ENCODE measurements at regions of chr12 and their contacts with region 1.

Region 1: DNA sequence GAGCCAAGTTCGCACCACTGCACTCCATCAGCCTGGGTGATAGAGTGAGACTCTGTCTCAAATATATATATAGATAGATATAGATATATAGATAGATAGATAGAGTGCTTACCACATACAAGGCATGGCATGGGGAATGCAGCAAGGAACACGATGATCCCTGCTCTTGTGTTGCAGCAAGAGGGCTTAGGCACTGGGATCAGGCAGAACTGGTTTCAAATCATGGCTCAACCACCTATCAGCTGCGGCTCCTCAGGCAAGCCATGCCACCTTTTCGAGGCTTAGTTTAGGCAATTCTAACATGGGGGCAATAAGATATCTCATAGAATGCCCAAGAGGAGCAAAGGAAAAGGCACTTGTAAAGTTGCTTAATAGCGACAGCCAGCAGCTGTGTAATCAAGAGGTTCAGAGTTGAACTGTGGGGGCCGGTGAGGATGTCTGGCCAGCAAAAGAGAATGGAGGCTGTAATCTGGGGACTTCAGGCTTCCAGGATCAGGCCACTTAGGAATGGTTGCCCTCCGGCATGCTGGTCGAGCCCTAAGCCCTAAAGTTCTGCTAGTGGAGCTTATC is 3.1 kb upstream of the TCHP start:
- DNase-seq: no peak
- ATAC-seq: no peak
- H3K4me3 ChIP-seq: no peak overlapping the region
- H3K27ac ChIP-seq: no peak overlapping the region
- H3K4me1 ChIP-seq: peaks cover 18% of the 10 kb centered on the region; the same call in 1 of the 2 replicates
- H3K27me3 ChIP-seq: no peaks in the 10 kb centered on the region
- CTCF ChIP-seq: no peak

Region 2: DNA sequence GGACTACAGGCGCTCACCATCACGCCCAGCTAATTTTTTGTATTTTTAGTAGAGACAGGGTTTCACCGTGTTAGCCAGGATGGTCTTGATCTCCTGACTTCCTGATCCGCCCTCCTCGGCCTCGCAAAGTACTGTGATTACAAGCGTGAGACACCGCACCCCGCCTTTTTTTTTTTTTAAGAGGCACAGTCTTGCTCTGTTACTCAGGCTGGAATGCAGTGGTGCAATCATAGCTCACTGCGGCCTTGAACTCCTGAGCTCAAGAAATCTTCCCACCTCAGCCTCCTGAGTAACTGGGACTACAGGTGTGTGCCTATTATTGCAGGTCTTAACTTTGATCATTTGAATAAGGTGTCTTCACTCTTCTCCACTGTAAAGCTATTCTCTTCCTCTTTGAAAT is 11.3 kb before region 1 on chr12:
- CTCF ChIA-PET with region 1: no interaction called
- POLR2A ChIA-PET with region 1: interaction called, 13 read pairs
- in situ Hi-C with region 1: no loop called
- intact Hi-C with region 1: no loop called
- DNase-seq: no peak
- ATAC-seq: no peak
- H3K4me3 ChIP-seq: no peak overlapping the region
- H3K27ac ChIP-seq: no peak overlapping the region
- H3K4me1 ChIP-seq: no peaks in the 10 kb centered on the region
- H3K27me3 ChIP-seq: no peaks in the 10 kb centered on the region
- CTCF ChIP-seq: no peak